AG04449 (cell line): ENCODE measurements at regions of chr10 and their contacts with region 1.

Region 1: DNA sequence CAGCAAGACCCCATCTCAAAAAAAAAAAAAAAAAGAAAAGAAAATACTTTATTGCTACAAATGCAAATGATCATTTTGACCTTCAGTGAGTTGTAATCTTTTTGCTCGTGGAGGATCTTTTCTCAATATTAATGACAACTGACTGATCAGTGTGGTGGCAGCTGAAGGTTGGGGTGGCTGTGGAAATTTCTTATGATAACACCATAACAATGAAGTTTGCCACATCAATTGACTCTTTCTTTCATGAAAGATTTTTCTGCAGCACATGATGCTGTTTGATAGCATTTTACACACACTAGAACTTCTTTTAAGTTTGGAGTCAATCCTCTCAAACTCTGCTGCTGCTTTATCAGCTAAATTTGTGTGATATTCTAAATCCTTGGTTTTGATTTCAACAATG is 12.4 kb upstream of the CCDC7 start:
- DNase-seq: no peak
- H3K4me3 ChIP-seq: no peak overlapping the region
- CTCF ChIP-seq: no peak

Region 2: GRCh38 chr10:32445740-32446535 is 12.4 kb after region 1 on chr10 and contains the start of gene CCDC7:
- CTCF ChIA-PET with region 1: interaction called, 15 read pairs
- POLR2A ChIA-PET with region 1: interaction called, 4 read pairs
- DNase-seq: peak; percentile 14
- H3K4me3 ChIP-seq: peak within 1 kb of the TSS; percentile 83
- CTCF ChIP-seq: peak; percentile 67

Region 3: GRCh38 chr10:32616438-32616837 is 182.9 kb after region 1 on chr10:
- CTCF ChIA-PET with region 1: no interaction called
- POLR2A ChIA-PET with region 1: no interaction called
- DNase-seq: no peak
- H3K4me3 ChIP-seq: no peak overlapping the region
- CTCF ChIP-seq: no peak